Activated CD4-positive, alpha-beta T cell treated with anti-CD3 and anti-CD28 coated beads for 36 hours (primary cell): ENCODE measurements at regions of chr14 and their contacts with region 1.

Region 1: GRCh38 chr14:20989572-20990551 is at the start of gene METTL17:
- DNase-seq: peak; percentile 93
- ATAC-seq: peak; percentile 97
- H3K4me3 Mint-ChIP-seq: peak within 1 kb of the TSS; percentile 92
- H3K27ac Mint-ChIP-seq: peak within 1 kb of the TSS; percentile 89
- H3K4me1 Mint-ChIP-seq: peaks cover 37% of the 10 kb centered on the region
- H3K27me3 Mint-ChIP-seq: no peaks in the 10 kb centered on the region
- total RNA-seq, gene METTL17: 89.3 to 90.0 TPM

Region 2: DNA sequence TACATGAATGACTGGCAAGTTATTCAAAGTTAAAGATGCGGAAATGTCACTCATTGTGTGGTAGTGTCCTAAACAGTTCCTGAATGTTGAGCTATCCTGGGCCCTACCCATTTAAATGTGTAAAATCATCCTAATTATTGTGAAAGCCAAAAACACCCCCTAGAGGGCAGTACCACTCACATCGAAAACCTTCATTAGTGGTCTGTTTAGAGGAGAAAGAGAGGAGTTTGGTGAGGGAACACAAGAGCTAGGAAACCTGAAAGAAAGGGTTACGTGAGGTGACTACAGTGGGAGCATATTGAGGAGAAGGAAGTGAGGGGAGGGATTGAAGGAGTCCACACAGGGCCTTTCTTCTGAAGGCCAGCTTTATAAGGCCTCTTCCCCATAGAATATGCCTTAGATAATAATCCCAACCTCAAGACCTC is 574.1 kb before region 1 on chr14:
- CTCF ChIA-PET with region 1: no interaction called
- POLR2A ChIA-PET with region 1: no interaction called
- intact Hi-C with region 1: no loop called
- DNase-seq: peak; percentile 44
- ATAC-seq: peak; percentile 35
- H3K4me3 Mint-ChIP-seq: no peak overlapping the region
- H3K27ac Mint-ChIP-seq: peak overlapping the region; percentile 14
- H3K4me1 Mint-ChIP-seq: peaks cover 29% of the 10 kb centered on the region
- H3K27me3 Mint-ChIP-seq: no peaks in the 10 kb centered on the region

Region 3: GRCh38 chr14:21003788-21004346 is 14.0 kb after region 1 on chr14:
- CTCF ChIA-PET with region 1: interaction called, 11 read pairs
- POLR2A ChIA-PET with region 1: no interaction called
- intact Hi-C with region 1: no loop called
- DNase-seq: no peak
- ATAC-seq: no peak
- H3K4me3 Mint-ChIP-seq: no peak overlapping the region
- H3K27ac Mint-ChIP-seq: no peak overlapping the region
- H3K4me1 Mint-ChIP-seq: no peaks in the 10 kb centered on the region
- H3K27me3 Mint-ChIP-seq: no peaks in the 10 kb centered on the region